ENCODE measurements at regions of chr13 and their contacts with region 1.

Region 1: DNA sequence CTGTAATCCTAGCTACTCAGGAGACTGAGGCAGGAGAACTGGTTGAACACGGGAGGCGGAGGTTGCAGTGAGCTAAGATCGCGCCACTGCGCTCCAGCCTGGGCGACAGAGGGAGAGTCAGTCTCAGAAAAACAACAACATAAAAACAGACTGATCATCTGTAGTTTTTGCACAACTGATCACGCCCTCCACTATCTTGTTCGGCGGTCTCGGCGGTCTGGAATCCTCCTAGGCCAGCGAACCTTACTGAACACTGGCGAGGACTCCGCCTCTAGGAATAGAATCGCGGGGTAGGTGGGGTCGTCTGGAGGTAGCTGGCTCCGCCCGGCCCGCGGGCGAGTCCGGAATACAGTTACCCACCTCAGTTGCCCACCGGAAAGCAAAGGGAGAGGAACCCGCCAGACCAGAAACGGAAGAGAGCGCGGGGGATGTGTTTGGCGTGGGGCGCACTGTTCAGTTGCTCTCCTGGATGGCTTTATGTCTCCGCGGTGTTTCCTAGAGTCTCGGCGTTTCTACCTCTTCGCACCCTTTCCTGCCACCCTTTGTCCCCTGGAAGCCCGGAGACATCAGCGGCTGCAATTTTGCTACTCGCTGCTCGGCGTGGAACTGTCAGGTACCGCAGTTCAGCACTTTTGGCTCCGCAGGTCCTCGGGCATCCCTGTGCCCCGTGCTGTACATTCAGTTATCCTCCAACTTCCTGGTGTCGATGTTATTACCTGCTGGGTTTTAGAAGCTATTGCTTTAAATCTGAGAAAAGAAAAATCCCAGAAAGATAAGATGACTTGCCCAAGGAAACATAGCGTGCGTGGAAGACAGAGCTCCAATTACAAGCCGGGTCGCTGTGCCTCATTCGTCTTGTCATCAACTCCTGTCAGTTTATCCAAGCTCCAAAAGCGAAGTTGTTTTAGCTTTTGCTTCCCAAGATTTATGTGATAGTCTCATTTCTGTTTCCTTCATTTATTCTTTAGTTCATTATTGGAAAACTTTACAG is 24.9 kb upstream of the HNRNPA1L2 start:
- DNase-seq: peak; percentile 83
- ATAC-seq: peak; percentile 97
- H3K4me3 ChIP-seq: peak overlapping the region; percentile 89
- H3K27ac ChIP-seq: peak overlapping the region; percentile 68
- H3K4me1 ChIP-seq: no peaks in the 10 kb centered on the region
- H3K27me3 ChIP-seq: no peaks in the 10 kb centered on the region
- CTCF ChIP-seq: no peak
- POLR2A ChIP-seq: peak; percentile 51; the same call in 1 of the 2 replicates
- RAD21 ChIP-seq: peak; percentile 35

Region 2: GRCh38 chr13:52947921-52948373 is 330.6 kb after region 1 on chr13:
- CTCF ChIA-PET with region 1: no interaction called
- POLR2A ChIA-PET with region 1: no interaction called
- dilution Hi-C with region 1: no loop called
- in situ Hi-C with region 1: no loop called
- intact Hi-C with region 1: no loop called
- DNase-seq: no peak
- ATAC-seq: no peak
- H3K4me3 ChIP-seq: no peak overlapping the region
- H3K27ac ChIP-seq: no peak overlapping the region
- H3K4me1 ChIP-seq: no peaks in the 10 kb centered on the region
- H3K27me3 ChIP-seq: no peaks in the 10 kb centered on the region
- CTCF ChIP-seq: no peak
- POLR2A ChIP-seq: no peak
- RAD21 ChIP-seq: no peak

Region 3: GRCh38 chr13:53104136-53104535 is 486.8 kb after region 1 on chr13:
- CTCF ChIA-PET with region 1: no interaction called
- POLR2A ChIA-PET with region 1: interaction called, 24 read pairs
- dilution Hi-C with region 1: no loop called
- in situ Hi-C with region 1: no loop called
- intact Hi-C with region 1: no loop called
- DNase-seq: no peak
- ATAC-seq: no peak
- H3K4me3 ChIP-seq: no peak overlapping the region
- H3K27ac ChIP-seq: no peak overlapping the region
- H3K4me1 ChIP-seq: no peaks in the 10 kb centered on the region
- H3K27me3 ChIP-seq: no peaks in the 10 kb centered on the region
- CTCF ChIP-seq: no peak
- POLR2A ChIP-seq: no peak
- RAD21 ChIP-seq: no peak

Region 4: DNA sequence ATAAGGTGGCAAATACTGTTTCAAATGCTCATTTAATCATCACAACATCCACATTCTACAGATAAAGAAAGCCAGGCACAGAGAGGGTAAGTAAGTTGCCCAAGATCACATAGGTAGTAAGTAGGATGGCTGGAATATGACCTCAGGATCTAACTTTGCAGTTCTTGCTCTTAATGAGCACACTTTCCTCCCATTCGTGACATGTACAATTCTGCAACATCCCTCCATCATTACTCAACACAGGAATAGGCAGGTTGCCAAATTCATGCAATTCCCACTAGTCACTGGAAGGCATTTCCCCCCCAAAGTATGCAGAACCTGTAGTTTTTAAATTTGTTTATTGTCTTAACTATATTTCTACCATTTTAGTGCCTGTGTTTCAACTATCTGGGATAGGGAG is 520.4 kb after region 1 on chr13:
- CTCF ChIA-PET with region 1: no interaction called
- POLR2A ChIA-PET with region 1: no interaction called
- dilution Hi-C with region 1: no loop called
- in situ Hi-C with region 1: loop called (anchors 25 kb)
- intact Hi-C with region 1: no loop called
- DNase-seq: peak; percentile 86
- ATAC-seq: peak; percentile 57
- H3K4me3 ChIP-seq: no peak overlapping the region
- H3K27ac ChIP-seq: no peak overlapping the region
- H3K4me1 ChIP-seq: 0 out of 2 replicates have a peak, but pooled peaks cover 4% of the 10 kb centered on the region
- H3K27me3 ChIP-seq: no peaks in the 10 kb centered on the region
- CTCF ChIP-seq: no peak
- POLR2A ChIP-seq: no peak
- RAD21 ChIP-seq: no peak